ENCODE measurements at regions of chr3 and their contacts with region 1.

Region 1: GRCh38 chr3:101303089-101303731 is 17.2 kb downstream of the IMPG2 start:
- DNase-seq: no peak
- ATAC-seq: no peak
- H3K4me3 ChIP-seq: no peak overlapping the region
- H3K4me3 Mint-ChIP-seq: no peak overlapping the region
- H3K27ac ChIP-seq: no peak overlapping the region
- H3K27ac Mint-ChIP-seq: no peak overlapping the region
- H3K4me1 ChIP-seq: no peaks in the 10 kb centered on the region
- H3K4me1 Mint-ChIP-seq: no peaks in the 10 kb centered on the region
- H3K27me3 ChIP-seq: no peaks in the 10 kb centered on the region
- H3K27me3 Mint-ChIP-seq: no peaks in the 10 kb centered on the region
- CTCF ChIP-seq: no peak

Region 2: GRCh38 chr3:101262393-101263240 is 40.6 kb before region 1 on chr3:
- CTCF ChIA-PET with region 1: no interaction called
- POLR2A ChIA-PET with region 1: no interaction called
- intact Hi-C with region 1: no loop called
- DNase-seq: no peak
- ATAC-seq: no peak
- H3K4me3 ChIP-seq: no peak overlapping the region
- H3K4me3 Mint-ChIP-seq: no peak overlapping the region
- H3K27ac ChIP-seq: no peak overlapping the region
- H3K27ac Mint-ChIP-seq: no peak overlapping the region
- H3K4me1 ChIP-seq: no peaks in the 10 kb centered on the region
- H3K4me1 Mint-ChIP-seq: no peaks in the 10 kb centered on the region
- H3K27me3 ChIP-seq: no peaks in the 10 kb centered on the region
- H3K27me3 Mint-ChIP-seq: no peaks in the 10 kb centered on the region
- CTCF ChIP-seq: no peak

Region 3: GRCh38 chr3:101281521-101282030 is 21.6 kb before region 1 on chr3:
- CTCF ChIA-PET with region 1: no interaction called
- POLR2A ChIA-PET with region 1: no interaction called
- intact Hi-C with region 1: loop called in 1 of 2 experiments (anchors 1 kb)
- DNase-seq: no peak
- ATAC-seq: no peak
- H3K4me3 ChIP-seq: no peak overlapping the region
- H3K4me3 Mint-ChIP-seq: no peak overlapping the region
- H3K27ac ChIP-seq: no peak overlapping the region
- H3K27ac Mint-ChIP-seq: no peak overlapping the region
- H3K4me1 ChIP-seq: no peaks in the 10 kb centered on the region
- H3K4me1 Mint-ChIP-seq: no peaks in the 10 kb centered on the region
- H3K27me3 ChIP-seq: no peaks in the 10 kb centered on the region
- H3K27me3 Mint-ChIP-seq: no peaks in the 10 kb centered on the region
- CTCF ChIP-seq: no peak